PC-9 (cell line): ENCODE measurements at regions of chr14 and their contacts with region 1.

Region 1: DNA sequence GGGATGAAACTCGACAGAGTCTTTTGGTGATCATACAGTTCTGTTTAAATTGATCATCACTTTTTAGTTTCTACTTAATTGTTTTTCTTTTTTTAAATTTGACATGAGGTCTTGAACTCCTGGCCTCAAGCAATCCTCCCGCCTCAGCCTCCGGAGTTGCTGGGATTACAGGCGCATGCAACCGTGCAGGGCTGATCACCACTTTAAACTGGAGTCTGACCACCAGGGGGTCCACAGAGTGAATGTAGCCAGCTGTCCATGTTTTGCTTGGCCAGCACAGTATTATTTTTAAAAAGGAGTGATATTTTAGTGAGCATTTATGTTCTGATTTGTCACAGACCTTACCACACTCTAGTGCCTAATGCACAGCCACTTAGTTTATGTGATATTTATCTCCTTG is 10.7 kb downstream of the DAAM1 start:
- DNase-seq: no peak
- H3K4me3 ChIP-seq: no peak overlapping the region
- H3K27ac ChIP-seq: no peak overlapping the region
- H3K4me1 ChIP-seq: no peaks in the 10 kb centered on the region
- H3K27me3 ChIP-seq: no peaks in the 10 kb centered on the region
- CTCF ChIP-seq: no peak

Region 2: GRCh38 chr14:58171090-58171489 is 1028.1 kb before region 1 on chr14:
- CTCF ChIA-PET with region 1: no interaction called
- POLR2A ChIA-PET with region 1: no interaction called
- intact Hi-C with region 1: no loop called
- DNase-seq: peak; percentile 70 to 75
- H3K4me3 ChIP-seq: no peak overlapping the region; the same call in 1 of the 2 replicates
- H3K27ac ChIP-seq: no peak overlapping the region; the same call in 1 of the 2 replicates
- H3K4me1 ChIP-seq: peaks cover 10% of the 10 kb centered on the region
- H3K27me3 ChIP-seq: no peaks in the 10 kb centered on the region
- CTCF ChIP-seq: no peak

Region 3: GRCh38 chr14:59116984-59117415 is 82.2 kb before region 1 on chr14:
- CTCF ChIA-PET with region 1: no interaction called
- POLR2A ChIA-PET with region 1: no interaction called
- intact Hi-C with region 1: no loop called
- DNase-seq: peak in 1 of 2 experiments; percentile 44
- H3K4me3 ChIP-seq: no peak overlapping the region
- H3K27ac ChIP-seq: no peak overlapping the region
- H3K4me1 ChIP-seq: 0 out of 2 replicates have a peak, but pooled peaks cover 5% of the 10 kb centered on the region
- H3K27me3 ChIP-seq: no peaks in the 10 kb centered on the region
- CTCF ChIP-seq: no peak

Region 4: DNA sequence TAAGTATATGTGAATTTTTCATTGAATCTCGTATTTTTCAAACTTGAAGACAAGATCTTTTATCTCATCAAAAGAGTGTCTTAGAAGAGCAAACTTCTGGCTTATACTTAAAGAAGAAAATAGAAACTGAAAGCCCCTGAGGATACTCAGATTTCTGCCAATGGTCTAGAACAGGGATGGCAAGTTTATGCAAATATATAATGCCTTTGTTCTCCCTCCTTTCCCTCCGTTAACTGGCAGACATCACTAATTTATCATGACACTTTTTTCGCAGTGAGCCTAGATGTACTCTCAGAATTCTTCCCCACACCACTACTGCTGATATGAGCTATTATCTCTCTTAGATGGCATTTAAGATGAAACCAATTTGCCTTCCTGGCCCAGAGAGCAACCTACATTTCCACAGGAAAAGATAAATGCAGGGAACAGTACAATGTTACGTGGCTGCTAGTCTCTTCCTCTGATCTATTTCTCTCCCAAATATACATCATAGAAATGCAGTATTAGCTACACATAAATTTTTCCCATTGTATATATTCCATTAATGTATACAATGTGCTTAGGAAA is 50.8 kb before region 1 on chr14:
- CTCF ChIA-PET with region 1: interaction called, 11 read pairs
- POLR2A ChIA-PET with region 1: no interaction called
- intact Hi-C with region 1: no loop called
- DNase-seq: no peak
- H3K4me3 ChIP-seq: no peak overlapping the region
- H3K27ac ChIP-seq: no peak overlapping the region
- H3K4me1 ChIP-seq: no peaks in the 10 kb centered on the region
- H3K27me3 ChIP-seq: no peaks in the 10 kb centered on the region
- CTCF ChIP-seq: no peak

Region 5: GRCh38 chr14:59377991-59378601 is 178.9 kb after region 1 on chr14:
- CTCF ChIA-PET with region 1: no interaction called
- POLR2A ChIA-PET with region 1: no interaction called
- intact Hi-C with region 1: no loop called
- DNase-seq: no peak
- H3K4me3 ChIP-seq: no peak overlapping the region
- H3K27ac ChIP-seq: no peak overlapping the region
- H3K4me1 ChIP-seq: no peaks in the 10 kb centered on the region
- H3K27me3 ChIP-seq: no peaks in the 10 kb centered on the region
- CTCF ChIP-seq: no peak

Region 6: DNA sequence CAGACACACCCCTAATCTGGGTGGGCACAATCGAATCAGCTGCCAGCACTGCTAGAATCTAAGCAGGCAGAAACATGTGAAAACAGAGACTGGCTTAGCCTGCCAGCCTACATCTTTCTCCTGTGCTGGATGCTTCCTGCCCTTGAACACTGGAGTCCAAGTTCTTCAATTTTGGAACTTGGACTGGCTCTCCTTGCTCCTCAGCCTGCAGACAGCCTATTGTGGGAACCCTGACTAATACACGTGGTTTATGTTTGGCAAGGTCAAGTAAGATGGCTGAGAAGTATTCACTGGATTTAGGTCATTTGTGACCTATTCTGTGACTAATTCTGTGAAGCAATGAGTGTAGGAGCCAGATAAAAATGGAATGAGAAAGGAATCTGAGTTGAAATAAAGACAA is 254.9 kb after region 1 on chr14:
- CTCF ChIA-PET with region 1: interaction called, 11 read pairs
- POLR2A ChIA-PET with region 1: no interaction called
- intact Hi-C with region 1: no loop called
- DNase-seq: no peak
- H3K4me3 ChIP-seq: no peak overlapping the region
- H3K27ac ChIP-seq: no peak overlapping the region
- H3K4me1 ChIP-seq: no peaks in the 10 kb centered on the region
- H3K27me3 ChIP-seq: no peaks in the 10 kb centered on the region
- CTCF ChIP-seq: no peak